ENCODE measurements at regions of chr18 and their contacts with region 1.

Region 1: DNA sequence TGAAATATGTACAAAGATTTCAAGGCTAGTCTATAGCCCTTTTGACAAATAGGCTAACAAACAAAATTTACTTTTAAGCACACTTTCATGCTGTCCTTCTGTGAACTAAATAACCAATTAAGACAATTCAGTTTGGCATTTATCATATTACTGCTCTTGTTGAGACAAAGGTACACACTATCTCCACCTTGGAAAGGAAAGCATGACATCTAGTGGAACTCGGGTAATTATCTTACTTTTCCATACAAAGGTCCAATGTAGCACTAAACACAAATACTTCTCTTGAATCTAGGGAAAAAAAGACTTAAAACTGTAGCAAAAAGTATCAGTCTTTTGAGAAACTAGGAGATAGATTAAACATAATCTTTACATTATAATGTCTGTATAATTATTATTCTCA is 125.0 kb upstream of the CD226 start:
- DNase-seq: peak; percentile 4
- H3K4me3 ChIP-seq: no peak overlapping the region
- H3K27ac ChIP-seq: no peak overlapping the region
- H3K4me1 ChIP-seq: no peaks in the 10 kb centered on the region
- H3K27me3 ChIP-seq: no peaks in the 10 kb centered on the region
- CTCF ChIP-seq: peak; percentile 25 to 49

Region 2: DNA sequence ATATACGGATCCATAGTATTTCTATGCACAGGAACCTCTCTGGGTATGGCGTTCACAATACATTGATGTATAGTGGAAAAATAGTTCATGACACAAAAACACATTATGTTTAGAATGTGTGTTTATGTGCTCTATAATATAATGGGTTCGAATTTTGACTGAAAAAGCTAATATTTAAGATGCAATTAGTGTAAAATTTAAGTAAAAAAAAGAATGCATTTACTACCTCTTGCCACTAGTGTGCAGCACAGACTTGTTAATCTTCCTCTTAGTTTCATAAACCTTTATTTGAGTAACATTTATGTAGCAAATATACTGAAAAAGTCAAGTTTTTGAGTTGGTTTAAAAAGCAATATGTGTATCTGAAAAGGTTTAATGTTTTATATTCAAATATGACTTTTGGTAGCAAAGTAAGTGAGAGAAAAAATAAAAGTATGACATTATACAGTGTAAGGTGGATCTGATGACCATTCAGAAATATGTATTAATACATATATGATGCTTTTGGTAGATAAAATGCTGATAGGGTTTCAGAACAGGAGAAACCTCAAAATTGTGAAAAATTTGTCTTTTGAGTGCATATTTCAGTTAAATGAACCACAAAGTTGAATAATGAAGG is 1225.3 kb before region 1 on chr18:
- CTCF ChIA-PET with region 1: no interaction called
- dilution Hi-C with region 1: no loop called
- in situ Hi-C with region 1: loop called in 1 of 2 experiments (anchors 25 kb)
- intact Hi-C with region 1: loop called (anchors 5 kb)
- DNase-seq: no peak
- H3K4me3 ChIP-seq: no peak overlapping the region
- H3K27ac ChIP-seq: no peak overlapping the region
- H3K4me1 ChIP-seq: no peaks in the 10 kb centered on the region
- H3K27me3 ChIP-seq: no peaks in the 10 kb centered on the region
- CTCF ChIP-seq: peak; percentile 64 to 87

Region 3: DNA sequence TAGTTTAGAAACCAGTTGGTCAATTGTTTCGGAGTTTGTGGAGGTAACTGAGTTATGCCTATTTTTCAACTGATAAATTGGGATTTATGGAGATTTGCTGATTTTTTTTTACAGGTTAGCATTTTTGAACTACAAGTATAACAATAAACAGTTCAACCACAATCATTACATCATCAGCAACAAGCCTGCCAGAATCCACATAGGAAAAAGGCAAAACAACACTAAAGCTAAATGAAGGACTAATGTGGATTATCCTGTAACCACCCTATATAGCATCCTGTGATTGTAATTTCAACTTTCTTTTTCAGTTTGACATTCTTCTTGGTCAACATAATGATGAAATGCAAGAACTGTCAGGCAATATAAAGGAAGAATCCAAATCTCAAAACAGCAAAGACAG is 1198.3 kb before region 1 on chr18:
- CTCF ChIA-PET with region 1: no interaction called
- dilution Hi-C with region 1: no loop called
- in situ Hi-C with region 1: loop called in 1 of 2 experiments (anchors 25 kb)
- intact Hi-C with region 1: no loop called
- DNase-seq: no peak
- H3K4me3 ChIP-seq: no peak overlapping the region
- H3K27ac ChIP-seq: no peak overlapping the region
- H3K4me1 ChIP-seq: no peaks in the 10 kb centered on the region
- H3K27me3 ChIP-seq: no peaks in the 10 kb centered on the region
- CTCF ChIP-seq: no peak

Region 4: GRCh38 chr18:68925268-68925667 is 1147.4 kb before region 1 on chr18:
- CTCF ChIA-PET with region 1: no interaction called
- dilution Hi-C with region 1: no loop called
- in situ Hi-C with region 1: no loop called
- intact Hi-C with region 1: loop called (anchors 10 kb)
- DNase-seq: peak; percentile 35
- H3K4me3 ChIP-seq: no peak overlapping the region
- H3K27ac ChIP-seq: no peak overlapping the region
- H3K4me1 ChIP-seq: peaks cover 15% of the 10 kb centered on the region
- H3K27me3 ChIP-seq: no peaks in the 10 kb centered on the region
- CTCF ChIP-seq: peak; percentile 16 to 49

Measured in mammary epithelial cell (primary cell).